Mammary epithelial cell (primary cell): ENCODE measurements at regions of chr4 and their contacts with region 1.

Region 1: GRCh38 chr4:89469930-89470375 is 162.4 kb upstream of the GPRIN3 start:
- DNase-seq: peak; percentile 88
- H3K4me3 ChIP-seq: peak overlapping the region in 1 of 3 experiments; percentile 10
- H3K27ac ChIP-seq: peak overlapping the region; percentile 71
- H3K4me1 ChIP-seq: peaks cover 9% of the 10 kb centered on the region
- H3K27me3 ChIP-seq: no peaks in the 10 kb centered on the region
- CTCF ChIP-seq: no peak

Region 2: GRCh38 chr4:89914609-89915550 is 444.9 kb after region 1 on chr4:
- CTCF ChIA-PET with region 1: no interaction called
- dilution Hi-C with region 1: no loop called
- in situ Hi-C with region 1: loop called in 1 of 2 experiments (anchors 25 kb)
- intact Hi-C with region 1: no loop called
- DNase-seq: no peak
- H3K4me3 ChIP-seq: no peak overlapping the region
- H3K27ac ChIP-seq: no peak overlapping the region
- H3K4me1 ChIP-seq: no peaks in the 10 kb centered on the region
- H3K27me3 ChIP-seq: no peaks in the 10 kb centered on the region
- CTCF ChIP-seq: no peak